ENCODE measurements at regions of chr2 and their contacts with region 1.

Region 1: DNA sequence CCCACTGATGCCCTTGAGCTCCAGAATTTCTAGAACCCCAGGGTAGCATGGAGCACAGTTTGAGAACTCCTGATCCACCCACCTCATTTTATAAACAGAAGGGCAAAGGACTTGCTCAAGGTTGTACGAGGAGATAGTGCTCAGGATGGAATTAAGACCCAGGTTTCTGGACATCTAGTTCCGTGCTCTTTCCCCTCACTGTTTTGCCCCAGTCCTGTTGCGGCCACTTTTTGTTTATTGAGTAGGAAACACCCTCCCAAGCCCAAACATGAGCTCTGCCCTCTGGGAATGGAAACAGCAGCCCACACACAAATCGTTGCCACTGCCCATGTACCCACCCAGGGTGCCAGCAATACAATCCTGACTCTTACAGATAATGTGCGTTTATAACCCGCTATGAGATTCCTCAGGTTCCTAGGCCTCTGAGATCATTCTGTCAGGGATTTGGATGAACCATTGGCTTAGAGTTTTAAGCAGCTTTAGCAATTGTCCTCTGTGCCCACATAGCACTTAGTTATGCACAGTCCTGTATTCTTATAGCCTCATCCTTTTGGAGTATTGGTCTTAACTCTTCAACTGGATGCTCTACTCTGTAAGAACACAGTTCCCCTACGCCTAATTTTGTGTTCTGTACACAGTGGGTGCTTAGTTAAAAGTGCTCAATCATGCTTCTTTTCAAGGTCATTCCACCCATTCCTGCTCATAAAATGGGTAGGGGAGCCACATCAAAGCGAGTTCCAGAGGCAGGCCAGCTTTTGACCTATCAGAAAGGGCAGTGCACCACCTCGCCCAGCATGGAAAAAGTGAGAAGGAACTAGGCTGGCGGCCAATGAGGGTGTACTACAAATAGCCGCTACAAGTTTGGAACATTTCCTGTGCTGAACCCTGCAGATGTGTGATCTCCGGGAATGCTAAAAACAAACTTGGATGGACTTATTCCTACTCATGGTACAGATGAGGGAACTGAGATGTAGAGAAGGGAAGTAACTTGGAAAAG is 60.3 kb upstream of the IGFBP2 start:
- DNase-seq: peak; percentile 85
- ATAC-seq: peak; percentile 96

Region 2: GRCh38 chr2:216535454-216535995 is 37.4 kb before region 1 on chr2:
- intact Hi-C with region 1: loop called (anchors 5 kb)
- DNase-seq: peak; percentile 77
- ATAC-seq: peak; percentile 65

Region 3: GRCh38 chr2:216651351-216651881 is 78.5 kb after region 1 on chr2:
- intact Hi-C with region 1: no loop called
- DNase-seq: no peak
- ATAC-seq: no peak

Region 4: DNA sequence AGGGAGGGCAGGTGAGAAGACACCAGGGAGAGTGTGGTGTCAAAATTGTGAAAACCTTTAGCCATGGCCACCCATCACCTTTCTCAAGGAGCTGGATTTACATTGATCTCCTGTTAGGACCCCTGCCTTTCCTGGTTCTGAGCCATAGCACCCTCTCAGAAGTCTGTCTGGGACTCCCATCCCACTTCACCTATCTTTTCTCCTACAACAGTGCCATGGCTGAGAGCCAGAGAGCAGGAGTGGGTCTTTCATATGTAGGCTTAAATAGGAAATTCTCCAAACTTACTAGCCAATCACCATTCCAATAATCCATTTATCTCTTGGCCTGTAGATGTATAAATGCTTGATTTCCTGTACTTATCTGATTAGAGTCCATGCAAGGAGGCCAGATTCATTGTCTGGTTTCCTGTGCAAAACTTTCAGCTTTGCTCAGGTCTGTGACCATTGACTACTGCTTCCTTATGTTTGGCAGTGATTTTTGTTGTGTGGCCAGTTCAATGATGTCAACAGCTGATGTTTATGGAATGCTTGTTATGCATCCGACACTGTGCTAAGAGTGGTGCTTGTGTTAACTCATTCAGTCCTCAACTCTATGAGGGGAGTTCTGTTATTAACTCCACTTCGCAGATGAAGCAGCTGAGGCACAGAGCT is 180.1 kb after region 1 on chr2:
- intact Hi-C with region 1: no loop called
- DNase-seq: no peak
- ATAC-seq: peak; percentile 34